Vagina (tissue), 2 donors: ENCODE measurements at regions of chr16 and their contacts with region 1.

Region 1: GRCh38 chr16:68310761-68311511 is at the starts of genes PRMT7 and SLC7A6OS:
- DNase-seq: no peak
- H3K4me3 ChIP-seq: peak within 1 kb of the TSS; percentile 71 to 81
- H3K27ac ChIP-seq: peak within 1 kb of the TSS; percentile 73
- H3K4me1 ChIP-seq: peaks cover 34% of the 10 kb centered on the region
- H3K27me3 ChIP-seq: no peaks in the 10 kb centered on the region
- CTCF ChIP-seq: peak in 1 of 3 experiments; percentile 48
- POLR2A ChIP-seq: peak in 1 of 2 donors; percentile 50
- total RNA-seq, gene PRMT7: 47.9 TPM
- total RNA-seq, gene SLC7A6OS: 15.5 TPM

Region 2: DNA sequence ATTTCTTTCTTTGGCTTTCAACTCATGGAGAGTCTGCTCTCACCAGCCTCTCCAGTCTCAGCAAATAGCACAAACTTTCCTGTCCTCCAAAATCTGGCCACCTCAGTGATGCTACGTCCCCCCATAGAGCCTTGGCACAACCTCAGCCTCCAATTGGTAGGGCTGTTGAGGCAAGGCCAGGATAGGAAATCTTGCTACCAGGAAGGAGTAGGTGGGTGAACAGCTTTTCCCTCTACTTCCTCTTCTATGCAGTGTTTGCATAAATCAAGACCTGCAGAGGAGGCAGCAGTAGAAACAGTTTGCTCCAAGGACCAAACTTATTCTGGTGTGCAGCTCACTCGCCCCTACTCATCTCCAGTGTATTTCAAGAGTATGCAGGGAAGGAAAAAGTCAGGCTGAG is 311.0 kb before region 1 on chr16:
- intact Hi-C with region 1: loop called (anchors 5 kb)
- DNase-seq: no peak
- H3K4me3 ChIP-seq: no peak overlapping the region
- H3K27ac ChIP-seq: no peak overlapping the region
- H3K4me1 ChIP-seq: no peaks in the 10 kb centered on the region
- H3K27me3 ChIP-seq: no peaks in the 10 kb centered on the region
- CTCF ChIP-seq: no peak
- POLR2A ChIP-seq: no peak

Region 3: GRCh38 chr16:68264128-68265077 is 46.5 kb before region 1 on chr16 and contains the start of gene SLC7A6:
- intact Hi-C with region 1: loop called (anchors 5 kb)
- DNase-seq: no peak
- H3K4me3 ChIP-seq: peak within 1 kb of the TSS; percentile 71 to 93
- H3K27ac ChIP-seq: peak within 1 kb of the TSS; percentile 99
- H3K4me1 ChIP-seq: peaks cover 50% of the 10 kb centered on the region
- H3K27me3 ChIP-seq: no peaks in the 10 kb centered on the region
- CTCF ChIP-seq: peak; percentile 29 to 52 (median 48)
- POLR2A ChIP-seq: peak in 1 of 2 donors; percentile 73
- total RNA-seq, gene SLC7A6: 35.1 TPM